H1 (cell line): ENCODE measurements at regions of chr3 and their contacts with region 1.

Region 1: DNA sequence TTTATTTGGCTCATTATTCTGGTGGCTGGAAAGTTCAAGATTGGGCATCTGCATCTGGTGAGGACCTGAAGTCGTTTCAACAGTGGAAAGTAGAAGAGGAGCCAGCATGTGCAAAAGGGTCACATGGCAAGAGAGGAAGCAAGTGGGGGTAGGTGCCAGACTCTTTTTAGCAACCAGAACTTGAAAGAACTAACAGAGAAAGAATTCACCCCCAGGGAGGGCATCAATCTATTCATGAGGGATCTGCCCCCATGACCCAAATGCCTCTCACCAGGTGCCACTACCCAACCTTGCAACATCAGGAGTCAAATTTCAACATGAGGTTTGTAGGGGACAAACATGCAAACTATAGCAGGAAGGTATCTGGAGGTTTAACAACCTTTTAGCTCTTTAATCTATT is 10.3 kb upstream of the RYK start:
- DNase-seq: peak; percentile 46 to 51
- H3K4me3 ChIP-seq: peak overlapping the region in 1 of 4 experiments; percentile 26; a peak in 1 of 8 replicates
- H3K27ac ChIP-seq: no peak overlapping the region; the same call in 1 of the 2 replicates
- H3K4me1 ChIP-seq: peaks cover 2 to 5% (median 2%) of the 10 kb centered on the region in 4 experiments; a peak in 3 of 7 replicates
- H3K27me3 ChIP-seq: no peaks in the 10 kb centered on the region
- CTCF ChIP-seq: no peak
- EP300 ChIP-seq: peak in 1 of 2 experiments; percentile 60; a peak in 1 of 3 replicates
- POLR2A ChIP-seq: no peak
- RAD21 ChIP-seq: no peak

Region 2: GRCh38 chr3:134250717-134251220 is 10.2 kb before region 1 on chr3 and contains the start of gene RYK:
- CTCF ChIA-PET with region 1: interaction called, 7 read pairs
- POLR2A ChIA-PET with region 1: interaction called, 17 read pairs
- DNase-seq: peak; percentile 34 to 88
- H3K4me3 ChIP-seq: peak within 1 kb of the TSS; percentile 75 to 87 (median 81)
- H3K27ac ChIP-seq: peak within 1 kb of the TSS; percentile 69; the same call in 1 of the 2 replicates
- H3K4me1 ChIP-seq: peaks cover 5 to 20% (median 13%) of the 10 kb centered on the region in 4 experiments
- H3K27me3 ChIP-seq: no peaks in the 10 kb centered on the region
- CTCF ChIP-seq: no peak
- EP300 ChIP-seq: no peak
- POLR2A ChIP-seq: peak in 1 of 2 experiments; percentile 86; a peak in 2 of 3 replicates
- RAD21 ChIP-seq: no peak
- total RNA-seq, gene RYK: 63.8 and 66.9 TPM in 2 replicates

Region 3: GRCh38 chr3:134287512-134287911 is 26.5 kb after region 1 on chr3:
- CTCF ChIA-PET with region 1: no interaction called
- POLR2A ChIA-PET with region 1: no interaction called
- DNase-seq: peak in 1 of 2 experiments; percentile 14
- H3K4me3 ChIP-seq: no peak overlapping the region
- H3K27ac ChIP-seq: no peak overlapping the region
- H3K4me1 ChIP-seq: no peaks in the 10 kb centered on the region
- H3K27me3 ChIP-seq: no peaks in the 10 kb centered on the region
- CTCF ChIP-seq: no peak
- EP300 ChIP-seq: no peak
- POLR2A ChIP-seq: no peak
- RAD21 ChIP-seq: no peak